MCF 10A (cell line): ENCODE measurements at regions of chr1 and their contacts with region 1.

Region 1: DNA sequence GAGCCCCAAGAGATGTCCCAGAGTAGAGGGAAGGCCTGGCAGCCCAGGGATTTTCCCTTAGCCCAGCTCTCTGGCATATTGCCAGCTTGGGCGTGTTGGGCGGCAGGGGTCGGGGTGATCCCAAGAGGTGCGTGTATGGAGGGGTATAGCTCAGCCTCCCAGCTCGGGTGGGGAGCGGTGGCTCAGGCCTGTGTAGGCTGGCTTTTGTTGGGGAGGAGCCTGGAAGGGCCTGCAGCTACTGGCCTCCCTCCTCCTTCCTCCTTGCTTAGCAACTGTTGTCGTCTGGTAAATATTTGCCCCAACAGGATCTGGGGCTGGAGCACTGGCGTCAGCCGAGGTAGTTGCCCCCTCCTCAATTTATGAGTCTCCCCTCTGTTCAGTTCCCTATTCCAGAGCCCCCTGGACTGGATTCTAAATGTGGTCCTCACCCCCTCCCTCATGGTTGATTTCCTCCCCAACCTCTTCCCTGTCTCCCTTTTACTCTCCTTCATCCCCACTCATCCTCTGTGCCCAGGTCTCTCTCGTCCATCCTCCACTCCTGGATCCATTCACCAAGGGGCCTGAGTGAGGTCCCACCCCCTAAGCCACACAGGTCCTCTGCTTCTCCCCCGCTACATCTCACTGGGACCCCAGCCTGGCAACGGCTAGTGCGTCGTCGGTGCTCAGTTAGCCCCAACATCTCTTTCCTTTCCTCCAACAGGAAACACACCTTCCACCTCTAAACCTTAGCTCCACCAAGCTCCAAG is 10.3 kb upstream of the LMNA start:
- DNase-seq: peak; percentile 94
- H3K4me3 Mint-ChIP-seq: peak overlapping the region; percentile 9
- H3K27ac Mint-ChIP-seq: peak overlapping the region; percentile 91
- H3K4me1 Mint-ChIP-seq: peaks cover 73% of the 10 kb centered on the region
- H3K27me3 Mint-ChIP-seq: no peaks in the 10 kb centered on the region
- CTCF ChIP-seq: no peak

Region 2: GRCh38 chr1:156114101-156114916 is 10.1 kb after region 1 on chr1 and contains the start of gene LMNA:
- CTCF ChIA-PET with region 1: interaction called, 1,892 read pairs
- POLR2A ChIA-PET with region 1: interaction called, 960 read pairs
- intact Hi-C with region 1: loop called (anchors 1 kb)
- DNase-seq: peak; percentile 100
- H3K4me3 Mint-ChIP-seq: peak within 1 kb of the TSS; percentile 79
- H3K27ac Mint-ChIP-seq: peak within 1 kb of the TSS; percentile 97
- H3K4me1 Mint-ChIP-seq: peaks cover 46% of the 10 kb centered on the region
- H3K27me3 Mint-ChIP-seq: no peaks in the 10 kb centered on the region
- CTCF ChIP-seq: no peak
- total RNA-seq, gene LMNA: 620 and 716 TPM in 2 replicates

Region 3: GRCh38 chr1:156172696-156173470 is 68.6 kb after region 1 on chr1:
- CTCF ChIA-PET with region 1: no interaction called
- POLR2A ChIA-PET with region 1: no interaction called
- intact Hi-C with region 1: no loop called
- DNase-seq: no peak
- H3K4me3 Mint-ChIP-seq: no peak overlapping the region
- H3K27ac Mint-ChIP-seq: no peak overlapping the region
- H3K4me1 Mint-ChIP-seq: no peaks in the 10 kb centered on the region
- H3K27me3 Mint-ChIP-seq: peaks cover 30% of the 10 kb centered on the region
- CTCF ChIP-seq: no peak